Left ventricle myocardium inferior (tissue), 1 donor: ENCODE measurements at regions of chr5 and their contacts with region 1.

Region 1: GRCh38 chr5:78467752-78468357 is 107.4 kb downstream of the SCAMP1 start:
- DNase-seq: no peak
- H3K4me3 ChIP-seq: no peak overlapping the region
- H3K27ac ChIP-seq: no peak overlapping the region
- H3K4me1 ChIP-seq: peaks cover 5% of the 10 kb centered on the region
- H3K27me3 ChIP-seq: no peaks in the 10 kb centered on the region
- CTCF ChIP-seq: peak; percentile 86

Region 2: GRCh38 chr5:78533356-78533755 is 65.5 kb after region 1 on chr5:
- intact Hi-C with region 1: loop called (anchors 2 kb)
- DNase-seq: no peak
- H3K4me3 ChIP-seq: no peak overlapping the region
- H3K27ac ChIP-seq: no peak overlapping the region
- H3K4me1 ChIP-seq: peaks cover 30% of the 10 kb centered on the region
- H3K27me3 ChIP-seq: no peaks in the 10 kb centered on the region
- CTCF ChIP-seq: peak; percentile 44

Region 3: DNA sequence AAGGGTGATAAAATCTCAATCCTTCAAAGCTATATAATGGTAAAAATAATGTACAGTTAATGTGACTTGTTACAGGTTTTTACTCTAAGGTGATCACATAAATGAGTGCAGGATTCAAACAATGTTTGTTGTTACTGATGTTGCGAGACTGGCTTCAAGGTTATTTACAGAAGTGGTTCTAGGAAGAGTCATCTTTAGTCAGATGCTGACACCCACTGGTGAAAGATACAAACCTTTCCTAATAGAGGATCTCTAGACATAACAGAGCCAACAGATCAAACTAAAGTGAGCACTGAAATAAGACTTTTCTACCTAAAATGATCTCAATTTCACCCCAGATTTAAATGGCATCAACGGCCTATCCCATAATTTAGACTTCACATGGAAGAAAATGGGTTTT is 497.0 kb after region 1 on chr5:
- intact Hi-C with region 1: loop called (anchors 10 kb)
- DNase-seq: no peak
- H3K4me3 ChIP-seq: no peak overlapping the region
- H3K27ac ChIP-seq: no peak overlapping the region
- H3K4me1 ChIP-seq: no peaks in the 10 kb centered on the region
- H3K27me3 ChIP-seq: no peaks in the 10 kb centered on the region
- CTCF ChIP-seq: peak; percentile 69